ENCODE measurements at regions of chr2 and their contacts with region 1.

Region 1: DNA sequence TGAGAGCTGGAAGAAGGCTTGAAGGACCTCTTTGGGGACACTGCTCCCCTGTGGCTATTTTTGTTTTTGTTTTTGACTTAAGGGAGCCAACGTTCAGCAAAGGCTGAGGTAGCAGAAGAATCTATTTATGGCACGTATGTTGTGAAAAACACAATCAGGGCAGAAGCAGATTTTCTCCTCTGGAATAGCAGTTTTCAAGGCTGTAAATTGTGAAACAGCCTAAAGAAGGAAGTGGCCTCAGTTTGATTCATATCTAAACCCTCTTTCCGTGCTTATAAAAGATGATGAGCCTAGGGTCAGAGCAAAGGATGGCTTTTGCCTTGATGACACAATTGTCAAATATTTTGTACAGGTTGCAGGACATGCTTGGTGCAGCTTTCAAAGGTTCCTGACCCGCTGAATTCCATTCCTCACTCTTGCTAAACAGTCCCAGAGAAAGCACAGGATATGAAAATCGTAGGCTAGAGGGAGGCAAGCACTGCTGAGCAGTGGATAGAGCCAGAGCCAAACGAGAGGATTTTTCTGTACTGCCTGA is 106.2 kb upstream of the DLX2 start:
- DNase-seq: no peak
- H3K4me3 ChIP-seq: no peak overlapping the region
- H3K27ac ChIP-seq: no peak overlapping the region
- H3K4me1 ChIP-seq: no peaks in the 10 kb centered on the region
- H3K27me3 ChIP-seq: no peaks in the 10 kb centered on the region
- CTCF ChIP-seq: no peak
- POLR2A ChIP-seq: no peak

Region 2: DNA sequence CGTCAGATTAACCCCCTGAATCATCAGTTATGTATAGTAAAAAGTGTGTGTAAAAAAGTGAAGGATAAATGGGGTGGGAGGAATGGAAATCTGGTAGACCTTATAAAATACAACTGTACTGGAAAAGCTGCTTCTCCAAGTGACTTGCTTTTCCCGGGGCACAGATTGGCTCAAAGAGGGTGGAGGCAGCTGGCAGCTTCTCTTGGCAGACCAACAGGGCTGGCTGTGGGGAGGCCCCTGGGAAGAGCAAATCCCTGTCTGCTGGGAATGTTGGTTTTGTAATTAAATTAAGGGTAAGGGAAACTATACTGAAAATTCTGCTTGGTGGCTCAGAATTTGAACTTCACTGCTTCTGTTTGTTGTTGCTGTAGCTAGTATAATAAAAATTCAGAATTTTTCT is 48.0 kb after region 1 on chr2:
- intact Hi-C with region 1: loop called (anchors 5 kb)
- DNase-seq: no peak
- H3K4me3 ChIP-seq: no peak overlapping the region
- H3K27ac ChIP-seq: no peak overlapping the region
- H3K4me1 ChIP-seq: no peaks in the 10 kb centered on the region
- H3K27me3 ChIP-seq: no peaks in the 10 kb centered on the region
- CTCF ChIP-seq: no peak
- POLR2A ChIP-seq: no peak

Measured in breast epithelium (tissue), 4 donors.